ENCODE measurements at regions of chr7 and their contacts with region 1.

Region 1: DNA sequence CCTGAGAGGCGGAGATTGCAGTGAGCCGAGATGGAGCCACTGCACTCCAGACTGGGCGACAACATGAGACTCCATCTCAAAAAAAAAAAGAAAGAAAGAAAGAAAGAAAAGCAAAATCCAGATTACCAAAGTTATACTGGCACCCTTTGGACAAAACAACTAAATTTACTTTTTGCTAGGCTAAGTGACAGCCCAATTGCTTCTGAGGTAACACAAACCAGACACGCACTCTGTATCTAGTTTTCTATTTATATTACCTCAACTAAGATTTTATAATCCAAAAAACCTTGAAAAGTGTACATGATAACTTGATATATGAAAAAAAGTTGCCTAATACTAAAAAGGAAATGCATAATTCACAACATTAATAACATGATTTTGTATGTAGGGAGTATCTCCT is 12.9 kb downstream of the UBE2H start:
- DNase-seq: no peak
- H3K4me3 ChIP-seq: no peak overlapping the region
- H3K27ac ChIP-seq: peak overlapping the region in 2 of 4 donors; percentile 4 to 6
- H3K4me1 ChIP-seq: peaks cover 0 to 36% (median 31%) of the 10 kb centered on the region in 4 donors
- H3K27me3 ChIP-seq: no peaks in the 10 kb centered on the region
- CTCF ChIP-seq: no peak
- EP300 ChIP-seq: no peak
- POLR2A ChIP-seq: no peak

Region 2: DNA sequence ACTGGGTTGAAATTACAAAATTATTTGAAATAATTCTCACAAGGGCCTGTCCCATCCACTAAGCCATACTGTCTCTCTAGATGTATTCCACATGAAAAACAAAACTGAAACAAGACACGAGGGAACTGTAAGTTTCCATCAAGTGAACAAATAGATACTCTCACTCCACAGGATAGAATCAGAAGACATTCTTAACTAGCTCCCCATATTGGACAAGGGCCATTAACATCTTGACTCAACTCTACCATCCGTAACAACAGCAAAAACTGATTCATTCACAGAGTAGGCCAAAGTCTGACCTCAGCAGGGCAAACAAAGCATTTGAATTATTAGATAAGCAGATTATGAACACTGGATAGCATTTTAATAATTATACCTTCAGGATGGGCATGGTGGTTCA is 16.2 kb before region 1 on chr7:
- intact Hi-C with region 1: loop called (anchors 2 kb)
- DNase-seq: no peak
- H3K4me3 ChIP-seq: no peak overlapping the region
- H3K27ac ChIP-seq: peak overlapping the region in 3 of 4 donors; percentile 14 to 66 (median 47)
- H3K4me1 ChIP-seq: peaks cover 0 to 50% (median 37%) of the 10 kb centered on the region in 4 donors
- H3K27me3 ChIP-seq: no peaks in the 10 kb centered on the region
- CTCF ChIP-seq: no peak
- EP300 ChIP-seq: no peak
- POLR2A ChIP-seq: no peak

Region 3: DNA sequence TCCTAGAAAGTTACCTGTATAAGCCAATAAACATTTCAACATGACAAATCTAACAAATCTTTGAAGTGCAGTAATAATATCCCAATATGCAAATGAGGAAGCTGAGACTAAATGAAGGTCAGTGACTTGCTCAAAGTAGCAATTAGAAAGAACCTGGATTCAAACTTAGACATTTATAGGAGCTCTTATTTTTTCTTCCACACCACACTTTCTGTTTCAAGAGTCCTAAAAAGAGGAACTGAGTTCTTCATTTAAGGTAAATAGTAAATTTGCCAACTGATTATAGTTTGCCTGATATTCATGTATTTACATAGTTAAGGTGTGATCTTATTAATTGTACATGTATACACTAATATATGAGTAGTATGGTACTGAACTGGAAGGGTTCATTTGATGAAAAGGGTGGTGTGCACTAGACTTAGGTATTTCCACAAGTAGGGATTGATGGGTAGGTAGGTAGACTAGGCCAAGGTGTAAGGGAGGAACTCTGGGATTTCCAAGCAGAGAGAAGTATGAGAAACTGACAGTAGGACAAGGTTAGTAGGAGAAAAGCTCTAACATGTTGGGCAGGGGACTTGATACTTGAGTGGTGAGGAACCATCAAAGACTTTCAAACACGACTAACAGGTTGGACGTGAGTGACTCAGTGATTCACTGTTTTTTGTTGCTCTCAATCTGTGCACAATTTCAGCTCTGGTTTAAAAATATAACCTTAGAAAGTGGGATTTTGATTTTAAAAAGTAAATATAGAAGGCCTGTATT is 174.7 kb after region 1 on chr7:
- intact Hi-C with region 1: no loop called
- DNase-seq: no peak
- H3K4me3 ChIP-seq: no peak overlapping the region
- H3K27ac ChIP-seq: no peak overlapping the region
- H3K4me1 ChIP-seq: no peaks in the 10 kb centered on the region
- H3K27me3 ChIP-seq: no peaks in the 10 kb centered on the region
- CTCF ChIP-seq: no peak
- EP300 ChIP-seq: no peak
- POLR2A ChIP-seq: no peak

Region 4: DNA sequence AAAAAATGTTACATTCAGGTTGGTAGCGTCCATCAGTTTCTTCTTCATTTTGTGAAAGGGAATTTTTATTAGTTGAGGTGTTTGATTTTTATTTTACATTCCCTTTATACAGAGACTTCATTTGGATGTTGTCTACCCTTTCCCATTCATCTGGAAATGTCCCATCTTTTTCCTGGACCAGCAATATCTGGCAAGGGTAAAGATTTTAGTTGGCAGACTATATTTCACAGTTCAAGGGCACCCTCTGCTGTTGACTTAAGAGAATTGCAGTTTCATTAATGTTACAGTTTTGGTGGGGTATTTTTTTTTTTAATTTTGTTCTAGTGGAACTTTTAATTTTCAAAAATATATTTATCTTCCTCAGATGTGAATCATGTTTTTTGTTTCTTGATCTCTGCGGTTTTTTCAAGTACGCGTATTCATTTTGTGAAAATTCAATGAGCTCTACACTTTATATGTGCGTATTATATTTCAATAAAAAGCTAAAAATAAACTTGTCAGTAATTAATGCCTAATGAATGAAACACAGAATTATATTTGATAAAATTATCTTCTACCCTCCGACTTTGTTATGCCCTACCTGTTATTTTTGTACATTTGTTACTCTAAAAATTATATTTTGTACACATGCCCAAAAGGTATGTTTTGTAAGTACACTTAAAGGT is 892.1 kb after region 1 on chr7:
- intact Hi-C with region 1: no loop called
- DNase-seq: no peak
- H3K4me3 ChIP-seq: no peak overlapping the region
- H3K27ac ChIP-seq: no peak overlapping the region
- H3K4me1 ChIP-seq: no peaks in the 10 kb centered on the region
- H3K27me3 ChIP-seq: no peaks in the 10 kb centered on the region
- CTCF ChIP-seq: peak in 3 of 4 experiments; percentile 53 to 76 (median 54)
- EP300 ChIP-seq: no peak
- POLR2A ChIP-seq: no peak